ENCODE measurements at regions of chr4 and their contacts with region 1.

Region 1: DNA sequence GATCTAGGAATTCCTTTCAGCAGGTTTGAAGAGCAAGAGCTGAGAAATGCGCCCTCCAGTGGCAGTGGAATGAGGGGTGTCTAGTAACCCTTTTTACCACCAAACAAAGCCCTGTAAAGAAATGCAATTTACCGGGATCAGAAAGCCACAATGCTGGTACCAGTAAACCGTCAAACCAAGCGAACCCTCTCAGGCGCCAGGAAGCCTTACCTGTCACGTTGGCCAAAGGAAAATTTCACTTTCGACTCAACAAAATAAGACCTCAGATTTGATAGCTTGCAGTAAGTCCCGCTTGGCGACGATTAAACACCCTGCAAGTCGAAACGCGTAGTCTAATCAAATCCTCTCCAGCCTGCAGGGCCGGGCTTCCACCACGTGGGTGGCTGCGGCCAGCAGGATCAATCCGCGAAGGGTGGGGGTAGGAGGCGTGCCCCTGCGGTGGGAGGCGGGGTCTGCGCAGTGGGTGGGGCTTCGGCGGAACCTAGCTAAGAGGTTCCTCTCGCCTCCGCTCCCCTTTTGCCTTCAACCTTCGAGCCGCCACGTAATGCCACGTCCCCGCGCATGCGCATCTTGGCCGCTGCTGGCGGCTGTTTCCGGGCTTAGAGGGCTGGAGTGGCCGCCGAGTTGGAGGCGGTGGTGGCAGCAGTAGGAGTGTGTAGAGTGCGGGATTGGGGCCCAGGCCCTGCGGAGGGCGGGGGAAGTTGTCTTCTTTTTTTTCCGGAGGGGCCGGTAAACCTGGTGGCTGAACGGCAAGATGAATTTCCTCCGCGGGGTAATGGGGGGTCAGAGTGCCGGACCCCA is at the start of gene USO1:
- DNase-seq: peak; percentile 98 to 99
- ATAC-seq: peak; percentile 66 to 70
- H3K4me3 ChIP-seq: peak within 1 kb of the TSS; percentile 84 to 97 (median 85)
- H3K27ac ChIP-seq: peak within 1 kb of the TSS; percentile 91 to 99 (median 98)
- H3K4me1 ChIP-seq: peaks cover 34 to 37% of the 10 kb centered on the region in 2 donors
- H3K27me3 ChIP-seq: no peaks in the 10 kb centered on the region
- CTCF ChIP-seq: peak; percentile 80 to 93 (median 85)
- POLR2A ChIP-seq: peak; percentile 98
- total RNA-seq, gene USO1: 213 to 328 (median 254) TPM

Region 2: DNA sequence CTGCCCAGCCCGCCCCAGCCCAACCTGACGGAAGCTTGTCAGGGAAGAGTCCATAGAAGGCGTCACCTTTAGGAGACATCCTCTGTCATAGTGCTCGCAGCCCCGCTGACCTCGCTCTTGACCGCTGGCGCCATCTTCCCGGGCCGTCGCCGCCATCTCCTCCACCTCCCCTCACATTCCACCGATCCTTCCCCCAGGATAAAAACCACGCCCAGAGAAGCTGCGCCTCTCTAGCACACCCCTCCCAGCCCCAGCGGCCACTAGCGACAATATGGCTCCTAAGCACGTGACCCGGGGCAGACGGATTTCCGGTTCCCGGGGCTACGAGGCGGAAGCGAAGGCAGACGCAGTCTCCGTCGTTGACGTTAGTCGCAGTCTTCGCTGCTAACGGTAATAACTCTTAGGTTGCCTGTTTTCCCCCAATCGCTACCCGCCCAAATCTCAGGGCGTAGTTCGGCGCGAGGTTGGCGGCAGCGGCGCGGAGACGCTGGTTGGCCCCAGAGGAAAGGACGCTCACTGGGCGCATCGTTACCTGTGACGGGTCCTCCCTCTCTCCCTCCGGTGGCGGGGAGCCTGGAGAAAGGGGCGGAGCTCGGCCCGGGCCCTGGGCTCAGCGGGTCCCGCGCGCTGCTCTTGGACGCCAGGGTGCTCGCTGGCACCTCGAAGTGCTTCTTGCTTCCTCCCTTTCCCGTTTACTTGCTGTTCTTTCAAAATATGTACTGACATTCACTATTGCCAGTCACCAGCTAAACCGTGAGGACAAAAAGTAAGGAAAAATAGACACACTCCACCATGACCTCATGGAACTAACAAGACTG is 209.9 kb before region 1 on chr4 and contains the starts of genes RCHY1 and THAP6:
- in situ Hi-C with region 1: no loop called
- intact Hi-C with region 1: loop called (anchors 2 kb)
- DNase-seq: peak; percentile 95
- ATAC-seq: peak; percentile 96 to 98
- H3K4me3 ChIP-seq: peak within 1 kb of the TSS; percentile 86 to 93 (median 88)
- H3K27ac ChIP-seq: peak within 1 kb of the TSS; percentile 95 to 96 (median 95)
- H3K4me1 ChIP-seq: peaks cover 50 to 57% of the 10 kb centered on the region in 2 donors
- H3K27me3 ChIP-seq: no peaks in the 10 kb centered on the region
- CTCF ChIP-seq: peak in 3 of 5 experiments; percentile 9 to 37 (median 15)
- POLR2A ChIP-seq: peak; percentile 74 to 82
- total RNA-seq, gene RCHY1: 14.0 to 18.7 (median 15.8) TPM
- total RNA-seq, gene THAP6: 6.0 to 27.3 (median 13.9) TPM

Region 3: DNA sequence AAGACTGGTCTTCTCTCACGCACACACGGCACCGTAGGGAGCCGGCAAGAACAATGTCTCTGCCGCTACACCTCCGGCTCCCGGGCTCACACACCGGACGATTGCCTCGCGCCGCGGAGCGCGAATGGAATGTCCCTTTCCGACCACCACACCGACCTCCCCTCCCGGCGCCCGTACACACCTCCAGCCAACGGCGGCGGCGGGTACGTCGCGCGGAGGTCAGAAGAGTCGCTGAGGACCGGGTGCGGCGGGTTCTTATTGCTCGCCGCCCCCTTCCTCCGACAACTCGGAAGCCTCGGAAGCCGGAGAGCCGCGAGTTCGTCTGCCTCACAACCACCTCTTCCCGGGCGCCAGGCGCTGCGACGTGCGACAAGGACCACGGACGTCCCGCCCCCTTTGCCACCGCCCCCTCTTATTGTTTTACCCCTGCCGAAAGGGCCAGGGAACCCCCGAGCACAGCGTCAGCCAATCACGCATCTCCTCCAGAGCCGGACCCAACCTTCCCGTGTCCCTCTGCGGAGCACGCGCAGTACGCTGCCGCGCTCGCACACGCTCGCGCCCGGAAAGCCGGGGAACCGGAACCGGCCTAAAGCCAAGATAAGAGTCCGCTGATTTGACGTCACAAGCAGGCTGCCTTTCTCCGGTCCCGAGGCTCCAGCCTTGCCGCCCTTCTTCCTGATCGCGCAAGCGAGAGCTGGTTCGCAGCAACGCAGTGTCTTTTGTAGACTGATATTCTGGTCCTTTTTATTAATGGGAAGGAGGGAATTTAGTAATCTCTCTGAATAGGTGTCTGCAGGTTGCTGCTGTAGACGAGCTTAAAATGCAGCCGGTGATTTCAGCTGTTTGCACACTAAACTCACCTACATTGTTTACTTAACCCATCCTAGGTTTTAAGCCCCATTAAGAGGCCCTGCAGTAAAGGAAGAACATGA is 51.0 kb before region 1 on chr4 and contains the start of gene G3BP2:
- in situ Hi-C with region 1: loop called in 1 of 4 experiments (anchors 5 kb)
- intact Hi-C with region 1: loop called (anchors 1 kb)
- DNase-seq: peak; percentile 98 to 99
- ATAC-seq: peak; percentile 92 to 94
- H3K4me3 ChIP-seq: peak within 1 kb of the TSS; percentile 80 to 98 (median 95)
- H3K27ac ChIP-seq: peak within 1 kb of the TSS; percentile 96 to 99 (median 98)
- H3K4me1 ChIP-seq: peaks cover 42 to 43% of the 10 kb centered on the region in 2 donors
- H3K27me3 ChIP-seq: no peaks in the 10 kb centered on the region
- CTCF ChIP-seq: peak in 1 of 5 experiments; percentile 31
- POLR2A ChIP-seq: peak; percentile 97
- total RNA-seq, gene G3BP2: 123 to 226 (median 132) TPM

Region 4: DNA sequence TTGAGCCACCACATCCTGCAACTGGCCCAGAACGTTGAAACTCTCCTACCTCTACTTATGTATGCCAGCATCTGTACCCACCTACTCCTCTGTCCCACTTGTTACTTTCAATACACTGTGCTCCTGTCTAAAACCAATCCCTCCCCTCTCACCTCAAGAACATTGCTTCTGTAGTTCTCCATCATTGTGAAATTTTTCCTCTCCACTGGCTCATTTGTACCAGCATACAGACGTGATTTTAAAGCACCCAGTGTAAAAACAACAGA is 25.4 kb before region 1 on chr4:
- in situ Hi-C with region 1: no loop called
- intact Hi-C with region 1: loop called (anchors 1 kb)
- DNase-seq: no peak
- ATAC-seq: no peak
- H3K4me3 ChIP-seq: no peak overlapping the region
- H3K27ac ChIP-seq: peak overlapping the region; percentile 84 to 91 (median 88)
- H3K4me1 ChIP-seq: peaks cover 8 to 12% of the 10 kb centered on the region in 2 donors
- H3K27me3 ChIP-seq: no peaks in the 10 kb centered on the region
- CTCF ChIP-seq: no peak
- POLR2A ChIP-seq: no peak

Region 5: GRCh38 chr4:76213415-76214176 is 489.3 kb after region 1 on chr4 and contains the start of gene SCARB2:
- in situ Hi-C with region 1: no loop called
- intact Hi-C with region 1: loop called (anchors 10 kb)
- DNase-seq: peak; percentile 85 to 88
- ATAC-seq: peak; percentile 64 to 65
- H3K4me3 ChIP-seq: peak within 1 kb of the TSS; percentile 71 to 98 (median 86)
- H3K27ac ChIP-seq: peak within 1 kb of the TSS; percentile 90 to 97 (median 96)
- H3K4me1 ChIP-seq: peaks cover 81 to 82% of the 10 kb centered on the region in 2 donors
- H3K27me3 ChIP-seq: no peaks in the 10 kb centered on the region
- CTCF ChIP-seq: peak in 3 of 5 experiments; percentile 5 to 25 (median 21)
- POLR2A ChIP-seq: peak; percentile 96 to 98
- total RNA-seq, gene SCARB2: 91.3 to 292 (median 186) TPM

Region 6: DNA sequence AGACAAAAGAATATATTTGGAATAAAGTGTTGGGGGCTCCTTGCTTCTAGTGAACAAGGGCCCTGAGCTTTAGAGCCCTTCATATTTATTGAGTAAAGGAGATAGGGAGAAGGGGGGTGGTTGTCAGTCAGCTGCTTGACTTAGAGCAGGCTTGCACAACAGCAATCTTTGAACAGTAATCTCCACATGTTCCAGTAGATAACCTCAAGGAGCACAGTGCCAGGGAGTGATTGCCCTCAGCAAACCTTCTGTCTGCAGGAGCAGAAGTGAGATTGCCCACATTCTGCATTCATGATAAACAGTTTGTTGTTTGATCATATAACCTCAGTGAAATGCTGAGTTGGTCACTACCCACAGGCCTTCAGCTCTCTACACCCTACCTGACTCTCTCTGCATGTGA is 1675.6 kb after region 1 on chr4:
- in situ Hi-C with region 1: no loop called
- intact Hi-C with region 1: no loop called
- DNase-seq: no peak
- ATAC-seq: no peak
- H3K4me3 ChIP-seq: no peak overlapping the region
- H3K27ac ChIP-seq: no peak overlapping the region
- H3K4me1 ChIP-seq: no peaks in the 10 kb centered on the region
- H3K27me3 ChIP-seq: no peaks in the 10 kb centered on the region
- CTCF ChIP-seq: no peak
- POLR2A ChIP-seq: no peak

Measured in gastrocnemius medialis (tissue), 4 donors.